Naive thymus-derived CD4-positive, alpha-beta T cell (primary cell): ENCODE measurements at regions of chr9 and their contacts with region 1.

Region 1: DNA sequence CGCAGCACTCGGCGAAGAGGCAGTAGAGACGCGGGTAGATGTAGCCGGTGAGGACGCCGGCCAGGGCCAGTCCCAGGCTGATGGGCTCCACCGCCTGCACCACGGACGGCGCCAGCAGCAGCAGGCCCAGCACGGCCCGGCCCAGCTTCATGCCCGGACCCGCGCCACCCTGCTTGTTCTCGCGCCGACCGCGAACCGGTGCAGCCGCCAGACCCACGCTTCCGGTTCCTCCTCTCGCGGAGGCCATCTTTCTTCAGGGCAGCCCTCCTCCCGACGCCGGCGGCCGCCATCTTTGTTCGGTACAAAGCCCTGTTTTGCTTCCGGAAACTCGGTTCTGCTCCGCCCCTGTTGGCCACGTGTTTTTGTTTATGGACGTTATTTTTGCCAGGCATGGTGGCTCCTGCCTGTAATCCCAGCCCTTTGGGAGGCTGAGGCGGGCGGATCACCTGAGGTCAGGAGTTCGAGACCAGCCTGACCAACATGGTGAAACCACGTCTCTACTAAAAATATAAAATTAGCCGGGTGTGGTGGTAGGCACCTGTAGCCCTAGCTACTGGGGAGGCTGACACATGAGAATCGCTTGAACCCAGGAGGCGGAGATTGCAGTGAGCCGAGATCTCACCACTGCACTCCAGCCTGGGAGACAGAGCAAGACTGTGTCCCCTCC is at the start of gene TOR1A:
- DNase-seq: peak; percentile 76 to 91 (median 89)
- ATAC-seq: peak; percentile 97
- H3K4me3 ChIP-seq: peak within 1 kb of the TSS; percentile 73
- H3K4me3 Mint-ChIP-seq: peak within 1 kb of the TSS; percentile 83 to 93 (median 90)
- H3K27ac ChIP-seq: peak within 1 kb of the TSS; percentile 78
- H3K27ac Mint-ChIP-seq: peak within 1 kb of the TSS; percentile 65 to 94 (median 84)
- H3K4me1 ChIP-seq: peaks cover 0 to 9% of the 10 kb centered on the region in 2 donors
- H3K4me1 Mint-ChIP-seq: peaks cover 5 to 17% (median 11%) of the 10 kb centered on the region in 7 donors
- H3K27me3 ChIP-seq: no peaks in the 10 kb centered on the region
- H3K27me3 Mint-ChIP-seq: no peaks in the 10 kb centered on the region
- total RNA-seq, gene TOR1A: 13.8 to 52.9 (median 34.7) TPM

Region 2: DNA sequence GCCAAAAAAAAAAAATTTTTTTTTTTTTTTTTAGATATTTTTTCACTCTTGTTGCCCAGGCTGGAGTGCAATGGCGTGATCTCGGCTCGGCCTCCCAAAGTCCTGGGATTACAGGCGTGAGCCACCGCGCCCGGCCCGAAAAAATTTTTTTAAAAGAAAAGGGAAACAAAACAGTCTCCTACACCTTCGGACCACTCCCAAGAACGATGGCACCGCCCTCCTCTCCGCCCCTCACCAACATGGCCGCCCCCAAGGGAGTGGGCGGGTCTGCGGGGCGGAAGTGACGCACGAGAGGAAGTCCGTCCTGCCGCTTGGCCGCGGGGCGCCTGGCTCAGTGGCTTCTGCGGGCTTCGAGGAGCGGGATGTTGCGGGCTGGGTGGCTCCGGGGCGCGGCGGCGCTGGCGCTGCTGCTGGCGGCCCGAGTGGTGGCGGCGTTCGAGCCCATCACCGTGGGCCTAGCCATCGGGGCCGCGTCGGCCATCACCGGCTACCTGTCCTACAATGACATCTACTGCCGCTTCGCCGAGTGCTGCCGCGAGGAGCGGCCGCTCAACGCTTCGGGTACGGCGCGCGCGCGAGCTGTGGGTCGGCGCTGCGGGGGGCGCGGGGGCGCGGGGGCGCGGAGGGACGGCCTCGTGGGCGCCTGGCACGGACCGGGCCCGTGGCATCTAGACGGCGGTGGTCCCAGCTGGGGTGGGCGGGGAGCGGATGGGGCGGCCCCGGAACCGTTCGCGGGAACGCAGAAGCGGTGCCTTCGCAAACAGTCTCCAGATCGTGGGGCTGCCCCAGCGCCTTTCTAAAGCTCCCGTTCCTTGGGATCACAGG is 21.0 kb before region 1 on chr9 and contains the start of gene TOR1B:
- CTCF ChIA-PET with region 1: no interaction called
- POLR2A ChIA-PET with region 1: interaction called, 4 read pairs
- intact Hi-C with region 1: loop called (anchors 1 kb)
- DNase-seq: peak; percentile 91 to 97 (median 94)
- ATAC-seq: peak; percentile 97
- H3K4me3 ChIP-seq: peak within 1 kb of the TSS; percentile 73
- H3K4me3 Mint-ChIP-seq: peak within 1 kb of the TSS; percentile 87 to 95 (median 90)
- H3K27ac ChIP-seq: peak within 1 kb of the TSS; percentile 79
- H3K27ac Mint-ChIP-seq: peak within 1 kb of the TSS; percentile 85 to 97 (median 94)
- H3K4me1 ChIP-seq: peaks cover 12 to 20% of the 10 kb centered on the region in 2 donors
- H3K4me1 Mint-ChIP-seq: peaks cover 15 to 34% (median 28%) of the 10 kb centered on the region in 7 donors
- H3K27me3 ChIP-seq: no peaks in the 10 kb centered on the region
- H3K27me3 Mint-ChIP-seq: no peaks in the 10 kb centered on the region
- total RNA-seq, gene TOR1B: 16.2 to 30.9 (median 23.9) TPM

Region 3: GRCh38 chr9:129868916-129869486 is 44.9 kb after region 1 on chr9:
- CTCF ChIA-PET with region 1: no interaction called
- POLR2A ChIA-PET with region 1: interaction called, 162 read pairs
- intact Hi-C with region 1: loop called in 1 of 2 experiments (anchors 1 kb)
- DNase-seq: peak; percentile 67 to 95 (median 94)
- ATAC-seq: peak; percentile 93
- H3K4me3 ChIP-seq: peak overlapping the region; percentile 57
- H3K4me3 Mint-ChIP-seq: peak overlapping the region; percentile 49 to 77 (median 64)
- H3K27ac ChIP-seq: peak overlapping the region; percentile 87
- H3K27ac Mint-ChIP-seq: peak overlapping the region; percentile 88 to 96 (median 94)
- H3K4me1 ChIP-seq: peaks cover 59 to 73% of the 10 kb centered on the region in 2 donors
- H3K4me1 Mint-ChIP-seq: peaks cover 44 to 93% (median 77%) of the 10 kb centered on the region in 7 donors
- H3K27me3 ChIP-seq: no peaks in the 10 kb centered on the region
- H3K27me3 Mint-ChIP-seq: no peaks in the 10 kb centered on the region

Region 4: GRCh38 chr9:130053504-130054324 is 229.6 kb after region 1 on chr9 and contains the start of gene GPR107:
- CTCF ChIA-PET with region 1: no interaction called
- POLR2A ChIA-PET with region 1: no interaction called
- intact Hi-C with region 1: loop called in 1 of 2 experiments (anchors 1 kb)
- DNase-seq: peak; percentile 68 to 88 (median 73)
- ATAC-seq: peak; percentile 98
- H3K4me3 ChIP-seq: peak within 1 kb of the TSS; percentile 92
- H3K4me3 Mint-ChIP-seq: peak within 1 kb of the TSS; percentile 90 to 96 (median 94)
- H3K27ac ChIP-seq: peak within 1 kb of the TSS; percentile 96
- H3K27ac Mint-ChIP-seq: peak within 1 kb of the TSS; percentile 92 to 95 (median 94)
- H3K4me1 ChIP-seq: peaks cover 13% of the 10 kb centered on the region in 2 donors
- H3K4me1 Mint-ChIP-seq: peaks cover 6 to 44% (median 31%) of the 10 kb centered on the region in 7 donors
- H3K27me3 ChIP-seq: no peaks in the 10 kb centered on the region
- H3K27me3 Mint-ChIP-seq: no peaks in the 10 kb centered on the region
- total RNA-seq, gene GPR107: 21.6 to 24.0 (median 22.8) TPM